Ascending aorta (tissue), 2 donors: ENCODE measurements at regions of chr3 and their contacts with region 1.

Region 1: GRCh38 chr3:23999012-23999641 is 54.0 kb downstream of the NR1D2 start:
- DNase-seq: peak in 1 of 2 donors; percentile 92
- H3K4me3 ChIP-seq: no peak overlapping the region
- H3K27ac ChIP-seq: peak overlapping the region in 1 of 2 donors; percentile 42
- H3K4me1 ChIP-seq: peaks cover 0 to 8% of the 10 kb centered on the region in 2 donors
- H3K27me3 ChIP-seq: no peaks in the 10 kb centered on the region
- CTCF ChIP-seq: peak; percentile 91 to 95 (median 94)

Region 2: GRCh38 chr3:23916886-23917678 is 82.0 kb before region 1 on chr3 and contains the starts of genes NKIRAS1 and RPL15:
- intact Hi-C with region 1: no loop called
- DNase-seq: peak; percentile 89 to 97
- H3K4me3 ChIP-seq: peak within 1 kb of the TSS; percentile 96 to 98
- H3K27ac ChIP-seq: peak within 1 kb of the TSS; percentile 95 to 97
- H3K4me1 ChIP-seq: peaks cover 0 to 16% of the 10 kb centered on the region in 2 donors
- H3K27me3 ChIP-seq: no peaks in the 10 kb centered on the region
- CTCF ChIP-seq: peak; percentile 47 to 63 (median 47)
- total RNA-seq, gene NKIRAS1: 8.7 TPM
- total RNA-seq, gene RPL15: 1,680 TPM

Region 3: GRCh38 chr3:24060055-24060454 is 60.9 kb after region 1 on chr3:
- intact Hi-C with region 1: no loop called
- DNase-seq: peak; percentile 17 to 81
- H3K4me3 ChIP-seq: peak overlapping the region in 1 of 2 donors; percentile 8
- H3K27ac ChIP-seq: peak overlapping the region; percentile 71 to 83
- H3K4me1 ChIP-seq: peaks cover 0 to 14% of the 10 kb centered on the region in 2 donors
- H3K27me3 ChIP-seq: no peaks in the 10 kb centered on the region
- CTCF ChIP-seq: peak in 1 of 3 experiments; percentile 20

Region 4: DNA sequence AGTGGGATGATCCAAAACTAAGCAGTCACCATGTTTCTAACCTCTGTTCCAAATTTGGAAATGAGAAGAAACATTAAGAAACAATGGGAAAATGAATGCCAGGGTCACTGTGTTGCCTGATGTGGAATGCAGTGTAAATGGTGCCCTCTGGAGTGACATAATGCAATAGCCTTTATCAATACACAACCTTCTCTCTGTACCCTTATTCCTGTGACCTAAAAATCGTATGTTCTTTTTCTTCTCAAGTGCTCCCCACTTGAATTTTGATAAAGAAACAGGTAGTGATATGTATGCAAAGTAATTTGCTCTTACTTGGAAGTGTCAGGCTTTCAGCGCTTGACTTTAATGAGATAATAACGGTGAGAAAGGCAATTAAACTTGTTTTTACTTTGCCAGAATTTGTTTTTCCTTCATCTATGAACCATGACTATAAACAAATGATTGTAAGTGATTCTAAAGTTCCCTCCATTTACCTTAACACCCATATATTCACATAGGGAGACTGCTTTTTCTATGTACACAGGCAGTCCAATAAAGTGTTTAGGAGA is 641.3 kb after region 1 on chr3:
- intact Hi-C with region 1: loop called (anchors 10 kb)
- DNase-seq: no peak
- H3K4me3 ChIP-seq: no peak overlapping the region
- H3K27ac ChIP-seq: peak overlapping the region in 1 of 2 donors; percentile 9
- H3K4me1 ChIP-seq: peaks cover 0 to 3% of the 10 kb centered on the region in 2 donors
- H3K27me3 ChIP-seq: no peaks in the 10 kb centered on the region
- CTCF ChIP-seq: peak; percentile 10 to 47 (median 33)